Colonic mucosa (tissue), 4 donors: ENCODE measurements at regions of chr12 and their contacts with region 1.

Region 1: GRCh38 chr12:53419761-53420160 is 3.9 kb upstream of the AMHR2 start:
- DNase-seq: no peak
- H3K4me3 ChIP-seq: no peak overlapping the region
- H3K27ac ChIP-seq: no peak overlapping the region
- H3K4me1 ChIP-seq: no peaks in the 10 kb centered on the region
- H3K27me3 ChIP-seq: no peaks in the 10 kb centered on the region
- CTCF ChIP-seq: no peak

Region 2: DNA sequence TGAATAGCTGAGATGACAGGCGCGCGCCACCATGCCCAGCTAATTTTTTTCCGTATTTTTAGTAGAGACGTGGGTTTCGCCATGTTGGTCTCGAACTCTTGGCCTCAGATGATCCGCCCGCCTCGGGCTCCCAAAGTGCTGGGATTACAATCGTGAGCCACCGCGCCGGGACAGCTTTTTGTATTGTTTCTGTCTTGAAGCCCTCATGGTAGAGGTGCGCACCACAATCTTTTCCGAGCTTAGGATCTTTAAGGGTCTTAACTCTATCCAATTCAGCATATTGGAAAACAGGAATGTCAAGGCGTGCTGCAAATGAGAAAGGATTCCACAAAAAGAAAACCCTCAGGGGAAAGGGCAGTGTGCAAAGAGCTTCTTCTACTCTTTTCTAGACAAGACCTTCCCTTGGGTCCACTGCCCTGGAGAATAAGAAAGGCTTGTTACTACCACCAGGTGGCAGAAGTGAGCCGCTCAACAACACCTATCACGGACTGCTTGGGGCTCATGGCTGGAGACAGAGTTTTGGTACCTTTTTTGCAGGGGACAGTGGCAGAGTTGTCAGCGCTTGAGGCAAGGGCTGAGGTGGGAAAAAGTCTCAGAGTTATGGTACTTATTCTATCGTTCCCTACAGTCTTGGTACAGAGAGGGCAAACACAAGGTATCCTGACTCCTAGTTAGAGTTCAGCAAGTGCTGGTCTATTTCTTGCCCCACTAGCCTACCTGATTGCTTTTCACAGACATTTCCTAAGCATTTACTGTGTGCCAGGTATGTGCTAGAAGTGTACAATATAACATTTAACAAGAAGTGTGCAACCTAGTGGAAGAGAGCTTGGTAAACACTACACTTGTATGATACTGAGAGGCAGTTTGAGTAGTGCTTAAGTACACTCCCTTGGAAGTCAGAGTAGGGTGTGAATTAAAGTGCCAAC is 67.2 kb before region 1 on chr12:
- intact Hi-C with region 1: loop called (anchors 2 kb)
- DNase-seq: peak; percentile 91
- H3K4me3 ChIP-seq: no peak overlapping the region
- H3K27ac ChIP-seq: peak overlapping the region; percentile 62
- H3K4me1 ChIP-seq: no peaks in the 10 kb centered on the region
- H3K27me3 ChIP-seq: no peaks in the 10 kb centered on the region
- CTCF ChIP-seq: peak; percentile 84

Region 3: GRCh38 chr12:53561590-53561953 is 141.8 kb after region 1 on chr12:
- intact Hi-C with region 1: no loop called
- DNase-seq: no peak
- H3K4me3 ChIP-seq: no peak overlapping the region
- H3K27ac ChIP-seq: peak overlapping the region; percentile 51
- H3K4me1 ChIP-seq: no peaks in the 10 kb centered on the region
- H3K27me3 ChIP-seq: no peaks in the 10 kb centered on the region
- CTCF ChIP-seq: no peak